ENCODE measurements at regions of chr12 and their contacts with region 1.

Region 1: DNA sequence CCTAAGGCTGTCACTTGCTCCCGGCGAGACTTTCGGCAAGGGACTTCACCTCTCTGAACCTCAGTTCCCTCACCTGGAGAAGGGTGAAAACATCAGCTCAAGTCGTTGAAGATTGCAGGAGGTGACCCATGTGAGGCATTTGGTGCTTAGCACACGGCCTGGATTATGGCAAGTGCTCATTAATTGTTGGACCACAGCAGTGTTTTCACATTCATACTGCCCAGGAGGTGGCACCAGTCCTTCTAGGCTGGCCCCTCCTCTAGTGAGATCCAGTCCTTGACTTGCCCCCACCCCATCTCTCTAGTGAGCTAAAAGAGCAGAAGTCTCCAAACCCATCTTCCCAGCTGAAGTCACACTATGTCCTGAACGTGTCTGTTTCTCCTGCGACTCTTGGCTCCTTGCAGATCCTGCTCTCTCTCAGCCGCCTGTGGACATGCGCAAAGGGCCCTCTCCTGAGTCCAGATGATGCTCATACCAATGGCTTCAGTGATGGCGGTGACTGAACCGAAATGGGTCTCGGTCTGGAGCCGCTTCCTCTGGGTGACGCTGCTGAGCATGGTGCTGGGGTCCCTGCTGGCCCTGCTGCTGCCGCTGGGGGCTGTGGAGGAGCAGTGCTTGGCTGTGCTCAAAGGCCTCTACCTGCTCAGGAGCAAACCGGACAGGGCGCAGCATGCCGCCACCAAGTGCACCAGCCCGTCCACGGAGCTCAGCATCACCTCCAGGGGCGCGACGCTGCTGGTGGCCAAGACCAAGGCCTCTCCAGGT is 1.6 kb downstream of the FICD start:
- DNase-seq: no peak
- H3K4me3 ChIP-seq: peak overlapping the region in 1 of 4 experiments; percentile 87; a peak in 1 of 8 replicates
- H3K27ac ChIP-seq: no peak overlapping the region
- H3K4me1 ChIP-seq: peaks cover 0 to 5% (median 3%) of the 10 kb centered on the region in 4 experiments; a peak in 6 of 7 replicates
- H3K27me3 ChIP-seq: no peaks in the 10 kb centered on the region
- CTCF ChIP-seq: peak in 2 of 3 experiments; percentile 8 to 56; a peak in 3 of 4 replicates
- EP300 ChIP-seq: no peak
- POLR2A ChIP-seq: no peak
- RAD21 ChIP-seq: no peak

Region 2: DNA sequence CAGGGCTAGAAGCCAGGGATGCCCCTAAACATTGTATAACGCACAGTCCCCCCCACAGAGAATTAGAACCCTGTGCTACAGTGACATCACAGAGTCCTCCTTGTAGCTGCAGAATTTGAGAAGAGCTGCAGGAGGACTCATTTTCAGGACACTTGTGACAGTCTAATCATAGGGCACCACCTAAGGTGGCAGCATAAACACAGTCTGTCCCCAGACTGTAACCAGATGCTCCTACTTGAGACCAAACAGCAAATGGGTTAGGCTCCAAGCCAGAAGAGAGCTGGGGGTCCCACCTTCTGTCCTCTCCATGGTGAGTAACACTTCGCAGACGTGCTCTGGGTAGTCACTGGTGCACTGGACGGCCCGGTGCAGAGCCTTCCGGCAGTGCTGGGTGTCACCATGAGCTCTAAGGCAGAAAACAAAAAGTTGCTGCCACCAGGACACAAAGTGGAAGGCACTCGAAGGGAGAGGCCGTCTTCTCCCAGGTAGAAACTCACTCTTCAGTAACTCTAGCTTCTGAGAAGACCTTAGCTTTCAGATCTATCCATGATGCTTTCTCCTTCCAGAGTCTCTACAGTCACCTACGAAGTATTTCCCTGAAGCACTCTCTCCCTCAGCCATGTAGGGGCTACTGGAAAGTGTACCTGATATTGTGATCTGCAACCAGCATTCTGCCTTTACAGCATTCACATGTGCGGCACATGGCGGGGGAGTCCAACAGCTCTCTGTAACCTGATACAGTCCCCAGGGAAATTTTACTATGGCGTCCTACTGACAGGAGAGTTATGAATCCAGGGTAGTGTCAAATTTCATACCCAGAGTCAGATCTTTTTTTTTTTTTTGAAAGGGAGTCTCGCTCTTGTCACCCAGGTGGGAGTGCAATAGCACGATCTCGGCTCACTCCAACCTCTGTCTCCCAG is 15.5 kb after region 1 on chr12:
- CTCF ChIA-PET with region 1: interaction called, 17 read pairs
- POLR2A ChIA-PET with region 1: interaction called, 10 read pairs
- DNase-seq: no peak
- H3K4me3 ChIP-seq: no peak overlapping the region
- H3K27ac ChIP-seq: no peak overlapping the region
- H3K4me1 ChIP-seq: no peaks in the 10 kb centered on the region
- H3K27me3 ChIP-seq: no peaks in the 10 kb centered on the region
- CTCF ChIP-seq: no peak
- EP300 ChIP-seq: no peak
- POLR2A ChIP-seq: no peak
- RAD21 ChIP-seq: no peak

Region 3: DNA sequence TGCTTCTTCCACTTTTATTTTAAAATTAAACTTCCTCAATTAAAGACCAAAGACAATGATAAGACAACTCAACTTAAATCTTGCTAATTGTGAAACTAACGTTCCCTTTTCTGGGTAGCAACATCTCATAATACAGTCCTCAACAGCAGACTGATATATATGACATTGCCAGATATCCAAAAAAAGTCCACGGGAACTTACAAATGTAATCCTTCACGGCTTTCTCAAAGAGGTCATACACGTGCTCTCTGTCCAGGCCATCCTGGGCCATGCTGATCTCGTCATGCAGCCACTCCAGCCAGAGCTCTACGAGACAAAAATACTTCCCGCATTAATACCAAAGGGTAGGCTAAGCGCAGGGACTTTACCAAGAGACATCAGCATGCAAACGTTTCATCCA is 31.0 kb after region 1 on chr12:
- CTCF ChIA-PET with region 1: no interaction called
- POLR2A ChIA-PET with region 1: no interaction called
- DNase-seq: no peak
- H3K4me3 ChIP-seq: no peak overlapping the region
- H3K27ac ChIP-seq: no peak overlapping the region
- H3K4me1 ChIP-seq: no peaks in the 10 kb centered on the region
- H3K27me3 ChIP-seq: peaks cover 0 to 2% (median 0%) of the 10 kb centered on the region in 4 experiments; a peak in 1 of 7 replicates
- CTCF ChIP-seq: no peak
- EP300 ChIP-seq: no peak
- POLR2A ChIP-seq: no peak
- RAD21 ChIP-seq: no peak

Region 4: DNA sequence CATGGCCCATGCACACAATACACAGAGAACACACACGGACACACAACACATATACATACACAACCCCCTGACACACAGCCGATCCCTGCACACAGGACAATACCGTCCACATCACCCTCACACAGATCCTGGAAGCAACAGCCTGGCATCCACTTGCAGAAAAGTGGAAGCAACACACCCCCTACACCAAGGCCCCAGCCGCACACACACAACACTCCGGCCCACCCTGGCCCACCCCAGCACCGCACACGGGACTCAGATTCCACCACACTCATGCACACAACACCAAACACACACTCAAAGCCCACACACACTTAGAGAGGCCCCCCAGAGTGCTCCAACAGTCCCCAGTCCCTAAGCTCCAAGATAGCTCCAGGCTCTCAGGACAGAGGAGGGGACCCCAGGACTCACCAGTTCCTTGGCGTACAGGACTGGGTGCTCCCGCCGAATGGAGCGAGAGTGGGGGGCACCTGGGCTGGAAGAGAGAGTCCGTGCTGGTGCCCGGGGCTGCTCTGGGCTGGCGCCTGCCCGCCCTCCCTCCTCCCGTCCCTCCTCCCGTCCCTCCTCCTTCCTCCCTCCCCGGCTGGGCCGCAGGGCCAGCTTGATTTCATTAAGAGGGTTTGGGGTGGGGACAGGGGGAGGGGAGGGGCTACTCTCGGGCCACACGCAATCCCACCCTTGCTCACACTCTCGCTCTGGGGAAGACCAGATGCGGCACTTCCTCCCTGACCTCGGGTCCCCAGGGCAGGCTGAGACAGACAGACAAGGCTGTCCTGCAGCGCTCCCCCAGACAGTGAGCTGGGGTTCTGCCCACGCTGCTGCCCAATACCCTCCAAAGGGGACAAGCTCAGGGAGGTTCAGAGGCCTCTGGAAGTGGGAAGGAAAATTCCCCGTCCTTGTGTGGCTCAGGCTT is 81.1 kb after region 1 on chr12 and contains the start of gene TMEM119:
- CTCF ChIA-PET with region 1: no interaction called
- POLR2A ChIA-PET with region 1: no interaction called
- DNase-seq: no peak
- H3K4me3 ChIP-seq: no peak within 1 kb of the TSS
- H3K27ac ChIP-seq: no peak within 1 kb of the TSS
- H3K4me1 ChIP-seq: peaks cover 0 to 14% (median 0%) of the 10 kb centered on the region in 4 experiments; a peak in 3 of 7 replicates
- H3K27me3 ChIP-seq: no peaks in the 10 kb centered on the region; a peak in 1 of 7 replicates
- CTCF ChIP-seq: no peak
- EP300 ChIP-seq: no peak
- POLR2A ChIP-seq: no peak
- RAD21 ChIP-seq: no peak
- total RNA-seq, gene TMEM119: 0.48 and 0.61 TPM in 2 replicates

Measured in H1 (cell line).